Pancreas (tissue), 10 donors: ENCODE measurements at regions of chr20 and their contacts with region 1.

Region 1: GRCh38 chr20:22586645-22587310 is 2.4 kb upstream of the FOXA2 start:
- DNase-seq: peak; percentile 65 to 96 (median 80)
- ATAC-seq: peak in 3 of 4 donors; percentile 24 to 48 (median 40)
- H3K4me3 ChIP-seq: peak overlapping the region; percentile 20 to 54 (median 33)
- H3K27ac ChIP-seq: no peak overlapping the region
- H3K4me1 ChIP-seq: peaks cover 0 to 2% (median 0%) of the 10 kb centered on the region in 3 donors
- H3K27me3 ChIP-seq: peaks cover 0 to 4% (median 0%) of the 10 kb centered on the region in 4 donors
- CTCF ChIP-seq: peak; percentile 75 to 88 (median 84)

Region 2: GRCh38 chr20:22339091-22339881 is 247.5 kb before region 1 on chr20:
- intact Hi-C with region 1: loop called in 2 of 3 experiments (anchors 5 to 10 kb)
- DNase-seq: peak in 3 of 6 donors; percentile 23 to 65 (median 46)
- ATAC-seq: peak; percentile 81 to 86 (median 86)
- H3K4me3 ChIP-seq: peak overlapping the region in 1 of 4 donors; percentile 18
- H3K27ac ChIP-seq: no peak overlapping the region
- H3K4me1 ChIP-seq: no peaks in the 10 kb centered on the region
- H3K27me3 ChIP-seq: no peaks in the 10 kb centered on the region
- CTCF ChIP-seq: peak; percentile 53 to 67 (median 62)

Region 3: DNA sequence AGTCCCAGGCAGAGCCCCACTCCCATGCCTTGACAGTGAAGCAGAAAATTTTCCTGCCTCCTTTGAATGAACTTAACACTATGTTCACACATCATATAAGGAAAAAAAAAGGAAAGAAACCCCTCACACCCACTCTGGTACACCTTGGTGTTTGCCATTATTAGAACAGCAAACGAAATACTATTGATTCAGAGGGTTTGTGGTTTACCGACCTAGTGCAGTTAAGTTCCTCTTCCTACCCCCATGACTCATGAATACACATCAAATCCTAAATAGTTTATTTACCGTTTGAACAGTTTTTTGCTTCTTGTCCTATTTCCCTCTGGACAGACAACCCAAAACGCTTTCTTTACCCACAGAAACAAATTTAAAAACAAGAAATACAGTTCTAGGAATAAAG is 240.1 kb before region 1 on chr20:
- intact Hi-C with region 1: loop called in 2 of 3 experiments (anchors 5 to 10 kb)
- DNase-seq: no peak
- ATAC-seq: no peak
- H3K4me3 ChIP-seq: no peak overlapping the region
- H3K27ac ChIP-seq: no peak overlapping the region
- H3K4me1 ChIP-seq: no peaks in the 10 kb centered on the region
- H3K27me3 ChIP-seq: no peaks in the 10 kb centered on the region
- CTCF ChIP-seq: no peak

Region 4: GRCh38 chr20:22368235-22368634 is 218.5 kb before region 1 on chr20:
- intact Hi-C with region 1: no loop called
- DNase-seq: no peak
- ATAC-seq: no peak
- H3K4me3 ChIP-seq: no peak overlapping the region
- H3K27ac ChIP-seq: no peak overlapping the region
- H3K4me1 ChIP-seq: no peaks in the 10 kb centered on the region
- H3K27me3 ChIP-seq: no peaks in the 10 kb centered on the region
- CTCF ChIP-seq: no peak

Region 5: GRCh38 chr20:22385602-22386305 is 201.0 kb before region 1 on chr20:
- intact Hi-C with region 1: loop called in 2 of 3 experiments (anchors 2 to 10 kb)
- DNase-seq: peak in 3 of 6 donors; percentile 11 to 30 (median 25)
- ATAC-seq: peak in 3 of 4 donors; percentile 80 to 87 (median 84)
- H3K4me3 ChIP-seq: no peak overlapping the region
- H3K27ac ChIP-seq: no peak overlapping the region
- H3K4me1 ChIP-seq: peaks cover 0 to 2% (median 0%) of the 10 kb centered on the region in 3 donors
- H3K27me3 ChIP-seq: no peaks in the 10 kb centered on the region
- CTCF ChIP-seq: peak in 3 of 4 donors; percentile 24 to 44 (median 25)